HepG2 (cell line): ENCODE measurements at regions of chr17 and their contacts with region 1.

Region 1: DNA sequence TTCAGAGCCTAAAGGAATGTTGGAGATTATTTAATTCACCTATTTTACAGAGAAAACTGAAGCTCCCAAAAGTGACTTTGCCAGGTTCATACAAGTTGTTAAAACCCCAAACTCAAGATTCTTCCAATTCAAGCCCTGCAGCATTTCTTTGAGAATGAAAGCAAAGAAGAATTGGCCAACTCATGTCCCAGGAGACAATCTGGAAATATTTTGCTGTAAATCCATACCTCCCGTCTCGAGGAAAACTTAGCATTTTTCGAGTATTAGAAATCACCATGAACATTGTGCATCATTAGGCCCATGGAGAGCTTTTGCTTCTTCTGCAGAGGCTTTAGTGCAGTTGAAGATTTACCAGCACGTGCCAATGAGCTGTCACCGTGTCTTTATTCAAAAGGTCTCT is 176.4 kb upstream of the KCNJ16 start:
- DNase-seq: no peak
- ATAC-seq: no peak
- H3K4me3 ChIP-seq: no peak overlapping the region
- H3K27ac ChIP-seq: no peak overlapping the region
- H3K4me1 ChIP-seq: no peaks in the 10 kb centered on the region
- H3K27me3 ChIP-seq: no peaks in the 10 kb centered on the region
- CTCF ChIP-seq: no peak
- EP300 ChIP-seq: no peak
- POLR2A ChIP-seq: no peak
- RAD21 ChIP-seq: no peak

Region 2: DNA sequence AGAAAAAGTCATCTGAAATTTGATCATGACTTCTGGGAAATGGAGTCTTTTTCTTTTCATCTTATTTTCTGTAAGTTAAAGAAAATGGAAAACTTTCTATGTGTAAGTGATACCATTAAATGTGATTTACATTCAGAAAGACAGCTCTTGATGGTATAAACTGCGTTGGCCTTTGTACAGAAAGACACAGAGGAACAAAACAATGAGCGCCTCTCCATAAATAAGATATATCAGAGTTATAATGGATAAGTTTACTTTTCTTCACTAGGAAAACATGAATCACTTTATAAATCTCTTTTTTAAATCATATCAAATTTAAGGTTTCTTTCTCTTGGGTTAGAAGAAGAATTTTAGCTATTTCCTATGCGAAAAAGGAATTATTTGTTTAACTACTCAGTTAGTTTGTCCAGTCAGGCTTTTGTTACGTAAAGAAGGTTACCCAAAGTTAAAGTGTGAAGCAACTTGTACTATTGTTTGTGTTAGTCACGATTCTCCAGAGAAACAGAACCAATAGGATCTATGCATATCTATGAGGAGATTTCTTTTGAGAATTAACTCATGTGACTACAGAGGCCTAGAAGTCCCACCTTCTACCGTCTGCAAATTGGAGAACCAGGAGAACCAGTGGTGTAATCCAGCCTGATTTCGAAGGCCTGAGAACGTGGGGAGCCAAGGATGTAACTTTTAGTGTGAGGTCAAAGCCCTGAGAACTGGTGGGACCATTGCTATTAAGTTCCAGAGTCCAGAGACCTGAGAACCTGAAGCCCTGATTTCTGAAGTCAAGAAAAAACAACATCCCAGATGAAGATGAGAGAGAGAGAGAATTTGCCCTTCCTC is 119.0 kb before region 1 on chr17:
- CTCF ChIA-PET with region 1: no interaction called
- POLR2A ChIA-PET with region 1: no interaction called
- in situ Hi-C with region 1: loop called (anchors 25 kb)
- intact Hi-C with region 1: no loop called
- DNase-seq: no peak
- ATAC-seq: no peak
- H3K4me3 ChIP-seq: no peak overlapping the region
- H3K27ac ChIP-seq: no peak overlapping the region
- H3K4me1 ChIP-seq: no peaks in the 10 kb centered on the region
- H3K27me3 ChIP-seq: no peaks in the 10 kb centered on the region
- CTCF ChIP-seq: no peak
- EP300 ChIP-seq: no peak
- POLR2A ChIP-seq: no peak
- RAD21 ChIP-seq: no peak

Region 3: DNA sequence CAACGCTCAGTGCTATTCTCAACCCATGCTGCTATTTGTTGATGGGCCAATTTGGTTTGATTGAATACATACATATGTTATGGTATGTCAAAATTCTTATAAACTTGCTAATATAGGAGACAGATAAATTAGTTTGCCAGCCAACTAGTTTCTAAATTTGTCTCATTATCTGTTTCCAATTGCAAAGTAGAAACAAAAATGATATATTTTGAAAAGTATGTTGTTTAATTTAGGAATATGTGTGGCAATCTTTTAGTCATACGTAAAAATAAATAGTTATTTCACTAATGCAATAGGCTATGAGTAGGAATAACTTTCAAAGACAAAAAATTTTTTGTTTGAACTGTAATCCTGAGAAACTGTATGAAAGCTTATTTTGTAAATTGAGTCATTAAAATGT is 34.1 kb before region 1 on chr17:
- CTCF ChIA-PET with region 1: no interaction called
- POLR2A ChIA-PET with region 1: no interaction called
- in situ Hi-C with region 1: no loop called
- intact Hi-C with region 1: no loop called
- DNase-seq: no peak
- ATAC-seq: no peak
- H3K4me3 ChIP-seq: no peak overlapping the region
- H3K27ac ChIP-seq: no peak overlapping the region
- H3K4me1 ChIP-seq: no peaks in the 10 kb centered on the region
- H3K27me3 ChIP-seq: no peaks in the 10 kb centered on the region
- CTCF ChIP-seq: no peak
- EP300 ChIP-seq: no peak
- POLR2A ChIP-seq: no peak
- RAD21 ChIP-seq: no peak